Activated CD8-positive, alpha-beta memory T cell treated with anti-CD3 and anti-CD28 coated beads, Interleukin-2, amount 10 ng/mL, durations not matched to agents 7 days and 5 days (primary cell): ENCODE measurements at regions of chr11 and their contacts with region 1.

Region 1: DNA sequence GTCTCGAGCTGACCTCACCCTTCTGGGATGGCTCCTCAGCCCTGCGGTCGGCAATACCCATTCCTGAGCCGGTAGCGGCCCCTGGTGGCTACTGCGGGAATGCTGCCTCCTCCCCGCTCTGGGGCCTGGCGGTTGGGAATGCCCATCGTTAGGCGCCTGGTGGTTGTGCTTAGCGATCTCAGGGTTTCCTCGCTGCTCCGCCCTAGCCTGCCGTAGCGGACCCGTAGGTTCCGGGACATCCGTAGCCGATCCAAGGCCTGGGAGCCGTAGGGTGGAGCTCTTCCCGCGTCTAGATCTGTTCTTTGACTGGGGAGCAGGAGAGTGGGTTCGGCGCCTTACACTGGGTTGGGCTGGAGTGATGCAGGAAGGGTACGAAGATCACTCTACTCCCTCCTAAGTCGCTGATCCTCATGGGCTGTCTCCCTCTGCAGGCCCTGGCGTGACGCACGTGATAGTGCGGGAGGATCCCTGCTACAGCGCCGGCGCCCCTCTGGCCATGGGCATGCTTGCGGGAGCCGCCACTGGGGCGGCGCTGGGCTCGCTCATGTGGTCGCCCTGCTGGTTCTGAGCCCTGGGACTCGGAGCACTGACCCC is 14.8 kb downstream of the PLEKHB1 start:
- DNase-seq: peak; percentile 87
- ATAC-seq: peak; percentile 93
- H3K4me3 Mint-ChIP-seq: no peak overlapping the region
- H3K27ac Mint-ChIP-seq: no peak overlapping the region
- H3K4me1 Mint-ChIP-seq: peaks cover 3% of the 10 kb centered on the region
- H3K27me3 Mint-ChIP-seq: no peaks in the 10 kb centered on the region

Region 2: GRCh38 chr11:73478738-73479347 is 182.3 kb before region 1 on chr11:
- CTCF ChIA-PET with region 1: interaction called, 14 read pairs
- DNase-seq: no peak
- ATAC-seq: no peak
- H3K4me3 Mint-ChIP-seq: no peak overlapping the region
- H3K27ac Mint-ChIP-seq: no peak overlapping the region
- H3K4me1 Mint-ChIP-seq: no peaks in the 10 kb centered on the region
- H3K27me3 Mint-ChIP-seq: no peaks in the 10 kb centered on the region

Region 3: GRCh38 chr11:73585834-73586575 is 75.1 kb before region 1 on chr11:
- CTCF ChIA-PET with region 1: no interaction called
- DNase-seq: no peak
- ATAC-seq: no peak
- H3K4me3 Mint-ChIP-seq: no peak overlapping the region
- H3K27ac Mint-ChIP-seq: no peak overlapping the region
- H3K4me1 Mint-ChIP-seq: peaks cover 9% of the 10 kb centered on the region
- H3K27me3 Mint-ChIP-seq: no peaks in the 10 kb centered on the region

Region 4: GRCh38 chr11:73647459-73648100 is 13.6 kb before region 1 on chr11:
- CTCF ChIA-PET with region 1: interaction called, 39 read pairs
- DNase-seq: peak; percentile 95
- ATAC-seq: peak; percentile 99
- H3K4me3 Mint-ChIP-seq: peak overlapping the region; percentile 74
- H3K27ac Mint-ChIP-seq: peak overlapping the region; percentile 77
- H3K4me1 Mint-ChIP-seq: peaks cover 14% of the 10 kb centered on the region
- H3K27me3 Mint-ChIP-seq: peaks cover 6% of the 10 kb centered on the region

Region 5: DNA sequence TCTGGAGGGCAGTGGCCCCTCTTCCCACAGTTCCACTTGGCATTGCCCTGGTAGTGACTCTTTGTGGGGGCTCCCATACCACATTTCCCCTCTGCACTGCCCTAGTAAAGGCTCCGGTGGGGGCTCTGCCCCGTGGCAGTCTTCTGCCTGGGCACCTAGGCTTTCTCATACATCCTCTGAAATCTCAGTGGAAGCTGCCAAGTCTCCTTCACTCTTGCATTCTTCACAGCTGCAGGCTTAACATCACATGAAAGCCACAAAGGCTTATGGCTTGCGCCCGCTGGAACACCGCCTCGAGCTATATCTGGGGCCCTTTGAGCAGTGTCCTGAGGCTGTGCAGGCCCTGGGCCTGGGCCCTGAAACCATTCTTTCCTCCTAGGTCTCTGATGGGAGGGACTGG is 10.6 kb after region 1 on chr11:
- CTCF ChIA-PET with region 1: interaction called, 16 read pairs
- DNase-seq: no peak
- ATAC-seq: no peak
- H3K4me3 Mint-ChIP-seq: no peak overlapping the region
- H3K27ac Mint-ChIP-seq: no peak overlapping the region
- H3K4me1 Mint-ChIP-seq: no peaks in the 10 kb centered on the region
- H3K27me3 Mint-ChIP-seq: no peaks in the 10 kb centered on the region

Region 6: GRCh38 chr11:73760679-73761402 is 99.7 kb after region 1 on chr11 and contains the start of gene RAB6A:
- CTCF ChIA-PET with region 1: no interaction called
- DNase-seq: peak; percentile 100
- ATAC-seq: peak; percentile 95
- H3K4me3 Mint-ChIP-seq: peak within 1 kb of the TSS; percentile 88
- H3K27ac Mint-ChIP-seq: peak within 1 kb of the TSS; percentile 87
- H3K4me1 Mint-ChIP-seq: peaks cover 25% of the 10 kb centered on the region
- H3K27me3 Mint-ChIP-seq: peaks cover 5% of the 10 kb centered on the region
- total RNA-seq, gene RAB6A: 85.3 to 94.2 TPM

Region 7: GRCh38 chr11:73818846-73819245 is 157.7 kb after region 1 on chr11:
- CTCF ChIA-PET with region 1: no interaction called
- DNase-seq: no peak
- ATAC-seq: no peak
- H3K4me3 Mint-ChIP-seq: no peak overlapping the region
- H3K27ac Mint-ChIP-seq: no peak overlapping the region
- H3K4me1 Mint-ChIP-seq: peaks cover 2% of the 10 kb centered on the region
- H3K27me3 Mint-ChIP-seq: no peaks in the 10 kb centered on the region